Activated T-helper 1 cell treated with anti-CD3 and anti-CD28 coated beads, Interleukin-12 subunit alpha, Interleukin-12 subunit beta, Interleukin-2, Interleukin-4 antibody, amounts not matched to agents 30 ng/mL and 10 ng/mL and 1 ng/mL, durations not matched to agents 14 hours and 24 hours and 36 hours (primary cell): ENCODE measurements at regions of chr6 and their contacts with region 1.

Region 1: GRCh38 chr6:67433124-67433523 is 1202.0 kb upstream of the ADGRB3 start:
- DNase-seq: no peak
- H3K4me3 Mint-ChIP-seq: no peak overlapping the region
- H3K27ac Mint-ChIP-seq: no peak overlapping the region
- H3K4me1 Mint-ChIP-seq: no peaks in the 10 kb centered on the region
- H3K27me3 Mint-ChIP-seq: no peaks in the 10 kb centered on the region

Region 2: GRCh38 chr6:67411036-67411435 is 22.1 kb before region 1 on chr6:
- intact Hi-C with region 1: no loop called
- DNase-seq: no peak
- H3K4me3 Mint-ChIP-seq: no peak overlapping the region
- H3K27ac Mint-ChIP-seq: no peak overlapping the region
- H3K4me1 Mint-ChIP-seq: no peaks in the 10 kb centered on the region
- H3K27me3 Mint-ChIP-seq: no peaks in the 10 kb centered on the region

Region 3: GRCh38 chr6:67802771-67803170 is 369.6 kb after region 1 on chr6:
- intact Hi-C with region 1: loop called (anchors 2 kb)
- DNase-seq: no peak
- H3K4me3 Mint-ChIP-seq: no peak overlapping the region
- H3K27ac Mint-ChIP-seq: no peak overlapping the region
- H3K4me1 Mint-ChIP-seq: no peaks in the 10 kb centered on the region
- H3K27me3 Mint-ChIP-seq: no peaks in the 10 kb centered on the region